ENCODE measurements at regions of chr19 and their contacts with region 1.

Region 1: DNA sequence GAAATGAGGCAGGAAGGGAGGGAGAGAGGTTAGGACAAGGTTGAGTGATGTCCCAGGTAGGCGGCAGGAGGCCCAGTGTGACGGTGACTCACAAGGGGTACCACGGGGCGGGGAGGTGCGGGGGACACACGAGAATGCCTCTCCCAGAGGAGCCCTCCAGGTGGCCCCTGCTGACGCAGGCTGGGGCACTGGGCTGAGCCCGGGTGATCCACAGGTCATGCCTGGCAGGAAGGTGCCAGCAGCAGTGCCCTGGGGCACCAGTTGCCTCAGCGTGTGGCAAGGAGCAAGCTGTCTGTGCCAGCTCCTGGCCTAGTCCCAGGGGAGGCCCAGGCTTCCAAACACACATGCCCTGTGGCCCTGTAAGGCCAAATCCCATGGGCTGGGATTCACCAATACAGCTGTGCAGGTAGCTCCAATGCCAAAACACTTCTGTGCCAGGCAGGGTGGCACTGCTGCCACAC is 28.1 kb downstream of the AKT2 start:
- DNase-seq: no peak
- ATAC-seq: peak; percentile 51
- H3K4me3 ChIP-seq: no peak overlapping the region
- H3K27ac ChIP-seq: no peak overlapping the region
- H3K4me1 ChIP-seq: peaks cover 12% of the 10 kb centered on the region
- H3K27me3 ChIP-seq: no peaks in the 10 kb centered on the region
- CTCF ChIP-seq: no peak

Region 2: DNA sequence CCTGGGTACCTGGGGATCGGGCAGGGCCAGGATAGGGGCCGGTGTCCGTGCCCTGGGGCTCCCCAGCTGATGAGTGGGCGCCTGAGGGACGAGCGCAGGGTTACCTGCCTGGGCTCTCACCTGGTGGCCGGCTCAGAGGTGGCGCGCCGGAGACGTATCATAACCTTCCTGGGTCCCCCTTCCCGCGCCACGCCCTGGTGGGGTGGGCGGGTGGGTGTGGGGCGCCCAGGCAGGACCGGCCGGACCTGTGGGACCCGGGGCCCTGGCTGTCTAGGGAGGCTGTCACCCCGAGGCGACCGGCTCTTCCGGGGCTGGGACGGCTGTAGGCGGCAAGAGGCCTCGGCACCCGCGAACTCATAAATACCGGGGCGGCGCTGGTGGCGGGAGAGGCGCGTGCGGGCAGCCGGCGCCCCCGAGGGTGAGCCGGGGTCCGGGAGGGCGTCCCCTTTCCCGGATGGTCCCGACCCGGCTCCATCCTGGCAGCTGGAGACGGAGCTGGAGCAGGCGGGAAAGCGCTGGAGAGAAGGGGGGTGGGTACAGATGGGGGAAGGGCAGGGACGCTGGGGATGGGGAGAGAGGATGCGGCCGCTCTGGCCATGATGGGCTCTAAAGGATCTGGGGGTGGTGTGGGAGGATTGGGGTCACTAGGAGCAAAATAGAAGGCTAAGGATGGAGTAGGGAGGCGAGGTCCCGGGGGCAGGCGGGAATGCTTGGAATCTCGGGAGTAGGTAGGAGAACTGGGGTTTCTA is 1172.9 kb before region 1 on chr19 and contains the start of gene ACP7:
- CTCF ChIA-PET with region 1: no interaction called
- POLR2A ChIA-PET with region 1: interaction called, 19 read pairs
- in situ Hi-C with region 1: no loop called
- intact Hi-C with region 1: no loop called
- DNase-seq: no peak
- ATAC-seq: peak; percentile 64
- H3K4me3 ChIP-seq: peak within 1 kb of the TSS; percentile 35 to 72
- H3K27ac ChIP-seq: peak within 1 kb of the TSS; percentile 67
- H3K4me1 ChIP-seq: peaks cover 52% of the 10 kb centered on the region
- H3K27me3 ChIP-seq: no peaks in the 10 kb centered on the region
- CTCF ChIP-seq: no peak
- total RNA-seq, gene ACP7: 10.3 TPM

Region 3: GRCh38 chr19:39480337-39481228 is 776.5 kb before region 1 on chr19 and contains the start of gene TIMM50:
- CTCF ChIA-PET with region 1: no interaction called
- POLR2A ChIA-PET with region 1: interaction called, 11 read pairs
- in situ Hi-C with region 1: no loop called
- intact Hi-C with region 1: no loop called
- DNase-seq: peak; percentile 100
- ATAC-seq: peak; percentile 96
- H3K4me3 ChIP-seq: peak within 1 kb of the TSS; percentile 39 to 55
- H3K27ac ChIP-seq: peak within 1 kb of the TSS; percentile 86
- H3K4me1 ChIP-seq: peaks cover 23% of the 10 kb centered on the region
- H3K27me3 ChIP-seq: no peaks in the 10 kb centered on the region
- CTCF ChIP-seq: no peak
- total RNA-seq, gene TIMM50: 1,837 TPM

Region 4: GRCh38 chr19:40210921-40211320 is 46.2 kb before region 1 on chr19:
- CTCF ChIA-PET with region 1: interaction called, 3 read pairs
- POLR2A ChIA-PET with region 1: interaction called, 11 read pairs
- in situ Hi-C with region 1: loop called (anchors 5 kb)
- intact Hi-C with region 1: no loop called
- DNase-seq: no peak
- ATAC-seq: 0 out of 2 replicates have a peak, but pooled peaks have one; percentile 2
- H3K4me3 ChIP-seq: no peak overlapping the region
- H3K27ac ChIP-seq: no peak overlapping the region
- H3K4me1 ChIP-seq: no peaks in the 10 kb centered on the region
- H3K27me3 ChIP-seq: no peaks in the 10 kb centered on the region
- CTCF ChIP-seq: no peak

Measured in Panc1 (cell line).